Heart left ventricle (tissue), 16 donors: ENCODE measurements at regions of chr18 and their contacts with region 1.

Region 1: GRCh38 chr18:44826418-44827259 is 146.0 kb downstream of the SETBP1 start:
- DNase-seq: peak in 4 of 5 donors; percentile 79 to 87 (median 82)
- ATAC-seq: peak; percentile 37 to 80 (median 66)
- H3K4me3 ChIP-seq: no peak overlapping the region
- H3K27ac ChIP-seq: peak overlapping the region; percentile 7 to 81 (median 64)
- H3K4me1 ChIP-seq: peaks cover 6 to 60% (median 33%) of the 10 kb centered on the region in 12 donors
- H3K27me3 ChIP-seq: no peaks in the 10 kb centered on the region
- CTCF ChIP-seq: no peak
- POLR2A ChIP-seq: no peak

Region 2: DNA sequence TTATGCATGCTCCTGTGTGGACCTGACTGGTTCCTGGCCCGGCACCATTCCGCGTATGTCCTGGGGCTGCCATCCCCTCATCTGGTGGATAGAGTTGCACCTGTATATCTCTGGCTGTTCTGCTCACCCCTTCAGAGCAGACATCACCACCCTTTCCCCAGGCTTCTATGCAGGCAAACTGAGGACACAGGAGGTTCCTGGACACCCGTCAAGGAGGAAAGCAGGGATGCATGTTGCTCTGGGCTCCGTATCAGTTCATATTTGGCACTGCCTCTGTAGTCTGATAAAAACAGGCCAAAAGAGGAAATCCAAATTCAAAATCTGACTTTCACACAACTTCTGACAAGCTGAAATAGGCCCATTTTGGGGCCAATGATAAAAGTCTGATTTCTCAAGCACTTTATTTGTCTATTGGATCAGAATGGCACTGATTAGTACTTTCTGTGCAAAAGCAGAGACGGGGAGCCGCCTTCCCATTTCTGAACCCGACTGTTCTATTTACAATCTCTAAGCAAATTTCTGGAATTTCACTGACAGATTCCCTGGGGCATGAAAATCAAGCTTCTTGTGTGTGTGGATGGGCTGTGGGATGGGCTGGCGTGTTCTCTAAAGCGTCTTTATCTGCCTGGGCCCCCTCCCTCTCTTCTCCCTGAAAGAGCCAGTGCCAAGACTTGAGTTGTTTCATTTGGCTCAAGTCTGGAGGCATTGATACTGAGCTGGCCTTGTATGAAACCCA is 49.0 kb before region 1 on chr18:
- intact Hi-C with region 1: loop called in 1 of 10 experiments (anchors 5 kb)
- DNase-seq: peak in 2 of 5 donors; percentile 31 to 48
- ATAC-seq: peak; percentile 28 to 49 (median 44)
- H3K4me3 ChIP-seq: no peak overlapping the region
- H3K27ac ChIP-seq: peak overlapping the region in 10 of 12 donors; percentile 0 to 69 (median 36)
- H3K4me1 ChIP-seq: peaks cover 0 to 54% (median 16%) of the 10 kb centered on the region in 12 donors
- H3K27me3 ChIP-seq: peaks cover 0 to 5% (median 0%) of the 10 kb centered on the region in 9 donors
- CTCF ChIP-seq: no peak
- POLR2A ChIP-seq: no peak

Region 3: DNA sequence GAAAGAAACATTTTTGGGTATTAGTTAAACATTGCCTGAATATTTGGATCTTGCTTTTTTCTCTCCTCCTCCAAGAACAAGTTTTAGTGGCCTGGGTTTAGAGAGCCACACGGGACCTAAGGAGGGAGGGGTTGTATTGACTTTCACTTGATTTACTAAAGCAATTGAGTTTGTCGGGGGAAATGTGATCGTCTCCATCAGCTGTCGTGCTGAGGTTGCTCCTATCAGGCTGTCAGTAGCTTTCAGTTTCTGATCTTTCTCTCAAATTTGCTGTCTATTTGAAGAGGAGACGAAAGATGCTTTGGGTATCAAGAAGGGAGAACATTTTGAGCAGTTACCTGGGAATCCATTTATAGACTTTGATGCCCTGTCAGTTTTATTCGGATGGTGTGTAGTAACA is 40.0 kb before region 1 on chr18:
- intact Hi-C with region 1: loop called in 1 of 10 experiments (anchors 5 kb)
- DNase-seq: no peak
- ATAC-seq: no peak
- H3K4me3 ChIP-seq: peak overlapping the region in 1 of 12 donors; percentile 20
- H3K27ac ChIP-seq: peak overlapping the region in 1 of 12 donors; percentile 34
- H3K4me1 ChIP-seq: peaks cover 5 to 47% (median 33%) of the 10 kb centered on the region in 12 donors
- H3K27me3 ChIP-seq: peaks cover 0 to 4% (median 0%) of the 10 kb centered on the region in 9 donors
- CTCF ChIP-seq: no peak
- POLR2A ChIP-seq: no peak